CD4-positive, alpha-beta memory T cell (primary cell): ENCODE measurements at regions of chr16 and their contacts with region 1.

Region 1: DNA sequence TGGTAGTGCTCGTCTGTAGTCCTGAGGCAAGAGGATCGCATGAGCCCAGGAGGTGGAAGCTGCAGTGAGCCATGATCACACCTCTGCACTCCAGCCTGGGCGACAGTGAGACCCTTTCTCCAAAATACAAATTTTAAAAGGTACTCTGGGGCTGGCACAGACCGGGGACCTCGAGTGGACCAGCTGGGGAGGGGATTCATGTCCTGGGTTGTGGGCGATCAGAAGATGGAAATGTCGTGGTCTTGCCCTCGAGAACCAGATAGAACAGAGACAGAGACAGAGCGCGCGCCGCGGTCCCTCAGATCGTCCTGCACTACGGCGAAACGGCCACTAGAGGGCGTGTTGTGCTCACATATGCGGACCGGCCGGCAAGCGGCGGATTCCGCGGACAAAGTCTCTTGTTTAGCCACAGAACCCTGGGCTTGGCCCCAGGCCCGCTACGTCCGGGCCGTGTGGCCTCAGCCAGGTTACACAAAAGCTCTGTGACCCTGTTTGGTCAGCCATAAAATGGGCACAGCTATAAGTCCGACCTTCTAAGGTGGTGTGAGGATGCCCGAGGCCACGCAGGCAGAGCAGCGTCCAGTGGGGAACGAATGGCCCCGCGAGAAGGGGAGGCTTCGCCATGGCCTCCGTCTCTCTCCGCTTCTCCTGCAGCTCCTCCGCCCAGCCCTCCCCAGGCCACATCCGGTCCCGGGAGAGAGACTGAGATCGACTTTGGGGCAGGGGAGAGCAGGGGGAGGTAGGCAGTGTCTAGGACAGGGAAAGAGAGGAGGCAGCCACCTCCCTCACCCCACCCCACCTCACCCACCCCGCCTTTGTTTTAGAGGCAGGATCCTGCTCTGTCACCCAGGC is 14.6 kb upstream of the SBK1 start:
- DNase-seq: peak; percentile 79 to 86 (median 80)
- H3K4me3 ChIP-seq: peak overlapping the region; percentile 69 to 76
- H3K4me3 Mint-ChIP-seq: peak overlapping the region; percentile 76 to 88 (median 84)
- H3K27ac ChIP-seq: peak overlapping the region; percentile 60
- H3K27ac Mint-ChIP-seq: peak overlapping the region; percentile 79 to 98 (median 94)
- H3K4me1 ChIP-seq: peaks cover 37% of the 10 kb centered on the region
- H3K4me1 Mint-ChIP-seq: peaks cover 24 to 49% (median 37%) of the 10 kb centered on the region in 4 donors
- H3K27me3 ChIP-seq: no peaks in the 10 kb centered on the region
- H3K27me3 Mint-ChIP-seq: peaks cover 0 to 8% of the 10 kb centered on the region in 2 donors

Region 2: DNA sequence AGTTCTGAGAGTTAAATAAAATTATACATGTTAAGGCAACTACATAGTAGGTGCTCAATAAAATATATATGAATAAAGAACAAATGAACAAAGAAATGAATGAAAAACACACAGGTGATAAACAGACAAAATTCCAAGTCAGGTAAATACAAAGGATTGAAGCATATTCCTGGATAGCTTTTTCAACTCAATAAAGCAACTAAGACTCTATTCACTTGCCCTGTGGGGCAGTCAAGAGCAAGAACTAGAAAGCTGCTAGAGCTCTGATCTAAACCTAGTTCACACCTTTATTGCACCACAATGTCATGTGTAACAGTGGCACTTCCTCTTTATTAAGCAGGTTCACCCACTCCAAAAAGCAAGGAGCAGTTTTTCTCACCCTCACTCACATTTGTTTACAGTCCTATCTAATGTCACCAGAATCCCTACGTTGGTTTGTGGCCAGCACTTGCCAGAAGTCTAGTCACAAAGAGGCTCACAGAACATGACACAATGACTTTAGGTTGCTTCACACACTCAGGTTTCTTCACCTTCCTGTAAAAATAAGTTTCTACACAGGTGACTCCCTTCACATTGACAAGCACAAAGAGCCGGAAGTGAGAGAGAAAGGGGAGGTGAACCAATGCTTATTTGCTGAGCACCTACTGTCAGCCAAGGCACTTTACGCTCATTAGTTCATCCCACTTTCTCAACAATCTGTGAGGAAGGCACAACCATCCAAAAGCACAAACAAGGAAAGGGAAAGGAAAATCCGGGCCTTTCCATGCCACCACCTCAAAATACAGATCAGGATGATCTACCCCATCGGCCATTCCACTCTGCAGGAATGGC is 136.8 kb before region 1 on chr16:
- CTCF ChIA-PET with region 1: interaction called, 3 read pairs
- POLR2A ChIA-PET with region 1: interaction called, 7 read pairs
- intact Hi-C with region 1: loop called (anchors 1 kb)
- DNase-seq: peak; percentile 87 to 96 (median 93)
- H3K4me3 ChIP-seq: peak overlapping the region; percentile 19 to 44
- H3K4me3 Mint-ChIP-seq: peak overlapping the region; percentile 76 to 94 (median 86)
- H3K27ac ChIP-seq: peak overlapping the region; percentile 69
- H3K27ac Mint-ChIP-seq: peak overlapping the region; percentile 89 to 100 (median 99)
- H3K4me1 ChIP-seq: peaks cover 97% of the 10 kb centered on the region
- H3K4me1 Mint-ChIP-seq: peaks cover 68 to 92% (median 81%) of the 10 kb centered on the region in 4 donors
- H3K27me3 ChIP-seq: no peaks in the 10 kb centered on the region
- H3K27me3 Mint-ChIP-seq: no peaks in the 10 kb centered on the region

Region 3: GRCh38 chr16:28297784-28298510 is 20.2 kb after region 1 on chr16:
- CTCF ChIA-PET with region 1: interaction called, 35 read pairs
- POLR2A ChIA-PET with region 1: interaction called, 33 read pairs
- intact Hi-C with region 1: no loop called
- DNase-seq: peak in 1 of 5 donors; percentile 26
- H3K4me3 ChIP-seq: no peak overlapping the region
- H3K4me3 Mint-ChIP-seq: peak overlapping the region; percentile 52 to 86 (median 75)
- H3K27ac ChIP-seq: peak overlapping the region; percentile 5
- H3K27ac Mint-ChIP-seq: peak overlapping the region; percentile 50 to 95 (median 87)
- H3K4me1 ChIP-seq: peaks cover 92% of the 10 kb centered on the region
- H3K4me1 Mint-ChIP-seq: peaks cover 48 to 81% (median 62%) of the 10 kb centered on the region in 4 donors
- H3K27me3 ChIP-seq: no peaks in the 10 kb centered on the region
- H3K27me3 Mint-ChIP-seq: no peaks in the 10 kb centered on the region

Region 4: DNA sequence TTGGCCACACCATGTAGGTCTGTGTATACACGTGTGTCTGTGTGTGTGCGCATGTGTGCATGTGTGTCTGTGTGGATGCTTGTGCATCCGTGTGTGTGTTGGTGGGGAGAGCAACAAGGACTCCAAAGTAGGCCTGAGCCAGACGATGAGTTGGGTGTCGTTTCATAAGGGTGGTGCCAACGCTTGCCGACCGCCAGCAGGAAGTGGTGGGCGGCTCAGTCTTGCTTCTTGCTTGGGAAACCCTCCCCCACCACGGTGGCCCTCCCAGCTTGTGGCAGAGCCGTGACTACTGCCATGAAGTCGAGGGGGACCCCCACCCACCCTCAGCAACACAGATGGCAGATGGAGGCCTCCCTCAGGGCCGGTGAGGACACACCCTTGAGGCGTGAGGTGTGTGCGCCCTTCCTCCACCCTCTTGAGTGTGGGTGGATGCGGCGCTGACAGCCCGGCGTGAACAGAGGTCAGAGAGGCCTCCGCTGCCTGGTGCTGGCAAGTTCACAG is 32.1 kb after region 1 on chr16:
- CTCF ChIA-PET with region 1: interaction called, 321 read pairs
- POLR2A ChIA-PET with region 1: interaction called, 68 read pairs
- intact Hi-C with region 1: no loop called
- DNase-seq: peak; percentile 85 to 95 (median 88)
- H3K4me3 ChIP-seq: peak overlapping the region in 1 of 2 donors; percentile 16
- H3K4me3 Mint-ChIP-seq: peak overlapping the region; percentile 8 to 83 (median 75)
- H3K27ac ChIP-seq: peak overlapping the region; percentile 72
- H3K27ac Mint-ChIP-seq: peak overlapping the region; percentile 91 to 99 (median 96)
- H3K4me1 ChIP-seq: peaks cover 53% of the 10 kb centered on the region
- H3K4me1 Mint-ChIP-seq: peaks cover 47 to 70% (median 55%) of the 10 kb centered on the region in 4 donors
- H3K27me3 ChIP-seq: no peaks in the 10 kb centered on the region
- H3K27me3 Mint-ChIP-seq: no peaks in the 10 kb centered on the region

Region 5: GRCh38 chr16:28553776-28554633 is 276.2 kb after region 1 on chr16 and contains the start of gene SGF29:
- CTCF ChIA-PET with region 1: interaction called, 3 read pairs
- POLR2A ChIA-PET with region 1: no interaction called
- intact Hi-C with region 1: loop called (anchors 1 kb)
- DNase-seq: peak; percentile 94 to 96 (median 96)
- H3K4me3 ChIP-seq: peak within 1 kb of the TSS; percentile 50 to 90
- H3K4me3 Mint-ChIP-seq: peak within 1 kb of the TSS; percentile 79 to 96 (median 92)
- H3K27ac ChIP-seq: peak within 1 kb of the TSS; percentile 95
- H3K27ac Mint-ChIP-seq: peak within 1 kb of the TSS; percentile 95 to 99 (median 98)
- H3K4me1 ChIP-seq: peaks cover 35% of the 10 kb centered on the region
- H3K4me1 Mint-ChIP-seq: peaks cover 21 to 46% (median 33%) of the 10 kb centered on the region in 4 donors
- H3K27me3 ChIP-seq: no peaks in the 10 kb centered on the region
- H3K27me3 Mint-ChIP-seq: no peaks in the 10 kb centered on the region
- total RNA-seq, gene SGF29: 67.5 to 70.0 TPM